ENCODE measurements at regions of chr19 and their contacts with region 1.

Region 1: GRCh38 chr19:4584670-4585460 is 25.4 kb upstream of the SEMA6B start:
- DNase-seq: peak; percentile 56
- H3K4me3 ChIP-seq: peak overlapping the region; percentile 74
- H3K27ac ChIP-seq: no peak overlapping the region
- H3K4me1 ChIP-seq: peaks cover 39% of the 10 kb centered on the region
- H3K27me3 ChIP-seq: peaks cover 7% of the 10 kb centered on the region
- CTCF ChIP-seq: no peak

Region 2: GRCh38 chr19:4624301-4624700 is 39.4 kb after region 1 on chr19:
- CTCF ChIA-PET with region 1: interaction called, 12 read pairs
- POLR2A ChIA-PET with region 1: no interaction called
- intact Hi-C with region 1: no loop called
- DNase-seq: no peak
- H3K4me3 ChIP-seq: no peak overlapping the region
- H3K27ac ChIP-seq: no peak overlapping the region
- H3K4me1 ChIP-seq: no peaks in the 10 kb centered on the region
- H3K27me3 ChIP-seq: peaks cover 3% of the 10 kb centered on the region
- CTCF ChIP-seq: no peak

Region 3: DNA sequence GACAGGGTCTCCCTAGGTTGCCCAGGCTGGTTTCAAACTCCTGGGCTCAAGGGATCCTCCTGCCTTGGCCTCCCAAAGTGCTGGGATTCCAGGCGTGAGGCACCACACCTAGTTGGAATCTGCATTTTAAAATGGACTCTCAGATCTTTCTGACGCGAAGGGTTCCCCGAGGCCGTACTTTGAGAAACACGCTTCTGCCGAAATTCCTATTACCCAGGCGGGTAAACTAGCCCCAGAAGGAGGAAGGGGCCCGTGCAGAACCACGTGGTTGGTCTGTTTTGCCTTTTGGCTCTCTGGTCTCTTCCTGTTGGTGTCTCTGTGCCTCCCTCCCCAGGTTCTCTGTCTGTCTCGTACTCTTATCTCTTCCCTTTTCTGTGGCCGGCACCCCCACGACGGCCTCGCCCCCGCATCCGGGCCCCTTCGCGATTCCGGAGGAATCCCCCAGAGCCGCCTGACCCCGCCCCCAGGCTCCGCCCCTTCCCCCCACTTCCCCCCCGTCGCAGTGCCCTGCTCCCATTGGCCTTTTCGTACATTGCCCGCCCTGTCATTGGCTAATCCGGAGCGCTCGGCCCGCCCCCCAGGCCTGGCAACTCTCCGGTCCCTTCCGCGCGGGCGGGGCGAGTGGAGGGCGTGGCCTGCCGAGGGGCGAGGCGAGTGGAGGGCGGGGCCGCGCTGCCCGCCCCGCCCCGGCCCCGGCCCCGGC is 54.1 kb after region 1 on chr19 and contains the start of gene TNFAIP8L1:
- CTCF ChIA-PET with region 1: no interaction called
- POLR2A ChIA-PET with region 1: no interaction called
- intact Hi-C with region 1: no loop called
- DNase-seq: peak; percentile 97
- H3K4me3 ChIP-seq: peak within 1 kb of the TSS; percentile 89
- H3K27ac ChIP-seq: peak within 1 kb of the TSS; percentile 80
- H3K4me1 ChIP-seq: peaks cover 21% of the 10 kb centered on the region
- H3K27me3 ChIP-seq: no peaks in the 10 kb centered on the region
- CTCF ChIP-seq: no peak
- total RNA-seq, gene TNFAIP8L1: 24.7 and 25.4 TPM in 2 replicates

Region 4: DNA sequence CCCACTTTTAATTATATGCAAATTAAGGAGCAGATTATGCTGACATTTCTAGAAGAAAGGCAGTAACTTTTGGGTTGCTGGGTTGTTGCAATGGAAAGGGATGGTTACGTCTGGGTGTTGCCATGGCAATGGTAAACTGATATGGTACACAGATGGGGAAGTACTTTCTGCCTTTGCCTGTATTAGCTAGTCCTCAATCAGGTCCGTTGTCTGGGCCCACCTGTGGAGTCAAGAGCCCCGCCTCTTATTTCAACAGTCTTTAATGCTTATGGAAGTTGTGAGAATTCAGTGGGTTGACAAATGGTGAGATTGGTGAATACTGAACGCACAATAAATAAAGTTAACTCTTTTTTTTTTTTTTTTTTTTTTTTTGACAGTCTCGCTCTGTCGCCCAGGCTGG is 169.4 kb after region 1 on chr19:
- CTCF ChIA-PET with region 1: no interaction called
- POLR2A ChIA-PET with region 1: interaction called, 13 read pairs
- intact Hi-C with region 1: no loop called
- DNase-seq: no peak
- H3K4me3 ChIP-seq: no peak overlapping the region
- H3K27ac ChIP-seq: no peak overlapping the region
- H3K4me1 ChIP-seq: no peaks in the 10 kb centered on the region
- H3K27me3 ChIP-seq: no peaks in the 10 kb centered on the region
- CTCF ChIP-seq: no peak

Measured in A673 (cell line).